SK-N-SH (cell line): ENCODE measurements at regions of chr17 and their contacts with region 1.

Region 1: GRCh38 chr17:4908301-4908700 is 5.4 kb upstream of the CHRNE start:
- DNase-seq: peak; percentile 45
- H3K4me3 ChIP-seq: no peak overlapping the region
- H3K27ac ChIP-seq: peak overlapping the region in 1 of 2 experiments; percentile 1; a peak in 1 of 4 replicates
- H3K4me1 ChIP-seq: peaks cover 0 to 13% of the 10 kb centered on the region in 2 experiments; a peak in 1 of 4 replicates
- H3K27me3 ChIP-seq: no peaks in the 10 kb centered on the region
- CTCF ChIP-seq: no peak
- EP300 ChIP-seq: no peak
- RAD21 ChIP-seq: no peak

Region 2: GRCh38 chr17:4672751-4673150 is 235.6 kb before region 1 on chr17:
- CTCF ChIA-PET with region 1: no interaction called
- POLR2A ChIA-PET with region 1: no interaction called
- DNase-seq: no peak
- H3K4me3 ChIP-seq: no peak overlapping the region
- H3K27ac ChIP-seq: no peak overlapping the region
- H3K4me1 ChIP-seq: no peaks in the 10 kb centered on the region
- H3K27me3 ChIP-seq: no peaks in the 10 kb centered on the region
- CTCF ChIP-seq: no peak
- EP300 ChIP-seq: no peak
- RAD21 ChIP-seq: no peak

Region 3: GRCh38 chr17:4891411-4892342 is 16.6 kb before region 1 on chr17:
- CTCF ChIA-PET with region 1: interaction called, 45 read pairs
- POLR2A ChIA-PET with region 1: no interaction called
- DNase-seq: no peak
- H3K4me3 ChIP-seq: no peak overlapping the region
- H3K27ac ChIP-seq: no peak overlapping the region
- H3K4me1 ChIP-seq: no peaks in the 10 kb centered on the region
- H3K27me3 ChIP-seq: no peaks in the 10 kb centered on the region
- CTCF ChIP-seq: no peak
- EP300 ChIP-seq: no peak
- RAD21 ChIP-seq: no peak

Region 4: GRCh38 chr17:4934173-4934979 is 26.1 kb after region 1 on chr17:
- CTCF ChIA-PET with region 1: interaction called, 29 read pairs
- POLR2A ChIA-PET with region 1: interaction called, 18 read pairs
- DNase-seq: peak; percentile 72
- H3K4me3 ChIP-seq: no peak overlapping the region
- H3K27ac ChIP-seq: no peak overlapping the region
- H3K4me1 ChIP-seq: peaks cover 7 to 22% of the 10 kb centered on the region in 2 experiments; a peak in 2 of 4 replicates
- H3K27me3 ChIP-seq: no peaks in the 10 kb centered on the region
- CTCF ChIP-seq: peak; percentile 44
- EP300 ChIP-seq: no peak
- RAD21 ChIP-seq: peak; percentile 25; the same call in 1 of the 2 replicates

Region 5: DNA sequence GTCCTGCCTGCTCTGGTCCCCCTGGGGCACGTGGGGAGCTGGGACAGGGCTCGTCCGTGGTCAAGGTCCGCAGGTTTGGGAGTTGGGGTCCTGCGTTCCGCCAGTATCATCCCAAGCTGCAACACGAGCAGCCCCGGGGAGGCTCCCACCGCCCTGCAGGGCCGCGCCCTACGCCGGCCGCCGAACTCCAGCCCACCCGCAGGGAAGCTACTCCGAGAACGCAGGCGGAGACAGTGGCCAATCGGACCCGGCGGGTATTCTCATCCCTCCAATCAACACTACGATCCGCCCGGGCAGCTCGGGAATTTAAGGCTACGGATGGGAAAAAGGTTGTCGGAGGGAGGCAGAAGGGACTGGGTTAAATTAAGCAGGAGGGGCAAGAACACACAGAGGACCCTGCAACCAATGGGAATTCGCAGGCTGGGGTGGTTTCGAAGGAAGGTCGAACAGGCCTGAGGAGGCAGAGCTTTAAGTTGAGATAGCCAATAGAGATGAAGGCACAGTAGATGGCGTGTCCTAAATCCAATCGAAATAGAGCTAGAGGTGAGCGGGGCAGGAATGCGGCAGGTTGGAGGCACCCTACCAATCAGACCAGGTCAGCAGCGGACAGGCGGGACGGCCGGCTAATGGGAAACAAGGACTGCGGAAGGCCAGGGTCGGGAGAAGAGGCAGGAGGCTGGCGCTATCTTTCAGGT is 58.7 kb after region 1 on chr17:
- CTCF ChIA-PET with region 1: interaction called, 20 read pairs
- POLR2A ChIA-PET with region 1: interaction called, 13 read pairs
- DNase-seq: peak; percentile 94
- H3K4me3 ChIP-seq: peak overlapping the region; percentile 59 to 72
- H3K27ac ChIP-seq: peak overlapping the region; percentile 93 to 96
- H3K4me1 ChIP-seq: peaks cover 16 to 24% of the 10 kb centered on the region in 2 experiments; a peak in 3 of 4 replicates
- H3K27me3 ChIP-seq: no peaks in the 10 kb centered on the region
- CTCF ChIP-seq: no peak
- EP300 ChIP-seq: no peak
- RAD21 ChIP-seq: no peak

Region 6: DNA sequence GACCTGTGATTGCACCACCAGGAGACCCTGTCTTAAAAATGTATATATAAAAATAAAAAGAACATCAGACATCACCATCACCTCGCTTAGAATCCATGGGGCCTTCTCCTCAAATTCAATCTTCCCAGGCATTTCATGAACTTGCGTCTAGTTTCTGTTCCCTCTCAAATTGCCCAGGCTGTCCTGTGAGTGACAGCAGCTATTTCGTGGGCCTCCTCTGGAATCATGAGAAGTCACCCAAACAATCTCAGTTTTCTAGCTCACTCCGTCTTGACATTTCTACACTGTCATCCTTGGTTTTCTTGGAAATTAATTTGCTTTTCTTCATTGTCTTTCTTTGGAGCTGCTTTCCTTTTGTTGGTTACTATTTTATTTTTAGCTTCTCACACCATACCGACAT is 119.6 kb after region 1 on chr17:
- CTCF ChIA-PET with region 1: no interaction called
- POLR2A ChIA-PET with region 1: no interaction called
- DNase-seq: no peak
- H3K4me3 ChIP-seq: no peak overlapping the region
- H3K27ac ChIP-seq: no peak overlapping the region
- H3K4me1 ChIP-seq: no peaks in the 10 kb centered on the region; a peak in 1 of 4 replicates
- H3K27me3 ChIP-seq: no peaks in the 10 kb centered on the region
- CTCF ChIP-seq: no peak
- EP300 ChIP-seq: no peak
- RAD21 ChIP-seq: no peak

Region 7: GRCh38 chr17:5055543-5055942 is 147.2 kb after region 1 on chr17:
- CTCF ChIA-PET with region 1: interaction called, 35 read pairs
- POLR2A ChIA-PET with region 1: no interaction called
- DNase-seq: peak; percentile 22
- H3K4me3 ChIP-seq: no peak overlapping the region
- H3K27ac ChIP-seq: no peak overlapping the region
- H3K4me1 ChIP-seq: no peaks in the 10 kb centered on the region
- H3K27me3 ChIP-seq: no peaks in the 10 kb centered on the region
- CTCF ChIP-seq: no peak
- EP300 ChIP-seq: no peak
- RAD21 ChIP-seq: no peak